Cardiac septum (tissue), 1 donor: ENCODE measurements at regions of chr11 and their contacts with region 1.

Region 1: GRCh38 chr11:62444236-62444833 is 25.5 kb downstream of the SCGB1A1 start:
- DNase-seq: peak; percentile 79

Region 2: DNA sequence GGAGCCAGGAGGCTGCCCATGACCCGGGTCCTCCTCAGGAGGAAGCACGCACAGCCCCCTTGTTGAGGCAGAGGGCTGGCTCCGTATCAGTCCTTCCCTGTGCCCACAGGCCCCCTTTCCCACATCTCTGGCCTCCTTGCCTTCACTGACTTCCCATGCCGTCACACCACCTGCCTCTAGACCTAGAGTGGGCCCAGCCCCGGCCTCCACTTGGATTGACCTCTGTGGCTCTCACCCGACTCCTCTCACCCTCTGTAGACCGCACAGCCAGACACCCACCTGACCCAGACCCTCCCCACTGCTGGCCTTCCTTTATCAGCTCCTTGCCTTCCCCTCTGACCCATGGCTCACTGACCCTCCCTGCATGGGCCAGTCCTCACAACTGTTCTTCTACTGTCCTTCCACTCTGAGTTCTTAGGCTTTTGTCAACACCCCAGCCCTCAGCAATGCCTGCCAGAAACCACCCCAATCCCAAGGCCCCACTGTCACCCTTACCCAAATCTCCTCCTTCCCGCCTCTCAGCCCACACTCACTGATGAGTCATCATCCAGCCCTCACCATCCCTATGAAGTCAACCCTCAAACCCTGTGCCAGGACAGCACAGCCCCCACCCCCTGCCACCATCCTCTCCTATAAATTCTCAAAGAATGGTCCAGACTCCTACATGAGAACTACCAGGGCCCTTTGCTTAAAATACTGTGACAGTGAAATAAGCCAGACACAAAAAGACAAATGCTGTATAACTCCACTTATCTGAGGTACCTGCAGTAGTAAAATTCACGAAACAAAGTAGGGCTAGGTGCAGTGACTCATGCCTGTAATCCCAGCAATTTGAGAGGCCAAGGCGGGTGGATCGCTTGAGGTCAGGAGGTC is 27.9 kb after region 1 on chr11:
- intact Hi-C with region 1: no loop called
- DNase-seq: no peak

Region 3: GRCh38 chr11:62484352-62484751 is 40.0 kb after region 1 on chr11:
- intact Hi-C with region 1: no loop called
- DNase-seq: no peak

Region 4: DNA sequence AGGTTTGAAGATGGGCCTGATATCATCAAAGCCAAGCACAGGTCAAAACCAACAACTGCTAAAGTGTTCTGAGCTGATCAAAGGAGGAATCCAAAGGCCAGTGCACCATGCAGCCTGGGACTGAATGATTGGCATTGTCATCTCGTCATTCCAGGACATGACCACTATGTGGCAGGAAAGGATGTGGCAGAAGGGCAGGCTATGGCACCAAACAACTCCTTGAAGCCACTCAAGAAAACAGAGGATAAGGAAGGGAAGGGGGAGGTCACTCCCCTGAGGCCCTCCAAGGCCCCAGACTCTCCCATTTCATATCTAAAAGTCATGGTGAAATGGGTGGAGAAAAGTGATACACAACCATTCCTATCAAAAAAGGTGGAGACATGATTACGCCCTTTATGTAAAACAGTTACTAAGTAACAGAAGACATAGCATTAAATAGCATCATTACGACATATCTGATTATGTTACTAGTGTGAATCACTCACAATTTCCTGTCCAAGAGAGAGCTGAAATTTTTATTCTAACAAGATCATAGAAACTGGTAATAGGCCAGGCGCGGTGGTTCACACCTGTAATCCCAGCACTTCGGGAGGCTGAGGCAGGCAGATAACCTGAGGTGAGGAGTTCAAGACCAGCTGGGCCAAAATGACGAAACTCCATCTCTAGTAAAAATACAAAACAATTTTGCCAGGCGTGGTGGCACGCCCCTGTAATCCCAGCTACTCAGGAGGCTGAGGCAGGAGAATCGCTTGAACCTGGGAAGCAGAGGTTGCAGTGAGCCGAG is 53.0 kb after region 1 on chr11:
- intact Hi-C with region 1: loop called (anchors 5 kb)
- DNase-seq: no peak